ENCODE measurements at regions of chr5 and their contacts with region 1.

Region 1: GRCh38 chr5:55102348-55102747 is at the start of gene GZMA:
- DNase-seq: peak; percentile 39
- H3K4me3 Mint-ChIP-seq: peak within 1 kb of the TSS; percentile 59
- H3K27ac Mint-ChIP-seq: peak within 1 kb of the TSS; percentile 77
- H3K4me1 Mint-ChIP-seq: peaks cover 65% of the 10 kb centered on the region
- H3K27me3 Mint-ChIP-seq: peaks cover 2% of the 10 kb centered on the region
- total RNA-seq, gene GZMA: 13.7 to 16.9 TPM

Region 2: GRCh38 chr5:55021410-55021809 is 80.9 kb before region 1 on chr5:
- CTCF ChIA-PET with region 1: interaction called, 3 read pairs
- POLR2A ChIA-PET with region 1: no interaction called
- intact Hi-C with region 1: loop called (anchors 2 kb)
- DNase-seq: no peak
- H3K4me3 Mint-ChIP-seq: no peak overlapping the region
- H3K27ac Mint-ChIP-seq: no peak overlapping the region
- H3K4me1 Mint-ChIP-seq: peaks cover 43% of the 10 kb centered on the region
- H3K27me3 Mint-ChIP-seq: no peaks in the 10 kb centered on the region

Region 3: DNA sequence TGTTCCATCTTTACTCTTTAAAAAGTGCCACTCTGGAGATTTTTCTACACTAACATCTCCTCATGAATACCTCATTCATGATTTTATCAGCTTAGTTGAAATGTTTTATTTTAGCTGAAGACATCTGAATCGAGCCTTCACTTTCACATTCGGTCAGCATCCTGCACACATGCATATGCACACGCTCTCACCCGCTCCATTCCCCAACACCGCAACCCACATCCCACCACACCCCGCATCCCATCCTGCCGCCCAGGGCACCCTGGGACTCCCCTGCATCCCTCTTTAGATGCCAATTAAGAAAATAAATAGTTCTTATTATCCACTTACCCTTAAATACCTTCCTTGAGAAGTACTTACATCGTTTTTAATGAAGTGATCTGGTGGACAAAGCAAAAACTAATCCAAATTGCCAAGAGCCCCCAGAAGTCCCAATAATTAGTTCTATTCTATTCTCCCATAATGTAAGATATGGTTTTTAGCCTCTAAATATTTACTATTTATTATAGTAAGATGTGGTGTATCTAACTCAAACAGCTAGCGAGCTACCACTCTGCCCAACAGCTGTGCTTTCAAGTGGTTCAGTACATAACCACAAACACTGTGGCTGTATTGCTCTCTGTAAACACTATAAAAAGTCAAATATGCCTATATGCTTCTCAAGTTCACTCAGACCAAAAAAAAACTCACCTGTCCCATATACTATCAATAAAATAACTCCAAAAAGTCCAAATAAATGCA is 40.1 kb before region 1 on chr5:
- CTCF ChIA-PET with region 1: no interaction called
- POLR2A ChIA-PET with region 1: no interaction called
- intact Hi-C with region 1: loop called (anchors 5 kb)
- DNase-seq: peak; percentile 83
- H3K4me3 Mint-ChIP-seq: peak overlapping the region; percentile 63
- H3K27ac Mint-ChIP-seq: peak overlapping the region; percentile 80
- H3K4me1 Mint-ChIP-seq: peaks cover 44% of the 10 kb centered on the region
- H3K27me3 Mint-ChIP-seq: no peaks in the 10 kb centered on the region

Region 4: GRCh38 chr5:55072666-55073065 is 29.7 kb before region 1 on chr5:
- CTCF ChIA-PET with region 1: no interaction called
- POLR2A ChIA-PET with region 1: no interaction called
- intact Hi-C with region 1: loop called (anchors 2 kb)
- DNase-seq: no peak
- H3K4me3 Mint-ChIP-seq: peak overlapping the region; percentile 16
- H3K27ac Mint-ChIP-seq: peak overlapping the region; percentile 75
- H3K4me1 Mint-ChIP-seq: peaks cover 31% of the 10 kb centered on the region
- H3K27me3 Mint-ChIP-seq: no peaks in the 10 kb centered on the region

Region 5: DNA sequence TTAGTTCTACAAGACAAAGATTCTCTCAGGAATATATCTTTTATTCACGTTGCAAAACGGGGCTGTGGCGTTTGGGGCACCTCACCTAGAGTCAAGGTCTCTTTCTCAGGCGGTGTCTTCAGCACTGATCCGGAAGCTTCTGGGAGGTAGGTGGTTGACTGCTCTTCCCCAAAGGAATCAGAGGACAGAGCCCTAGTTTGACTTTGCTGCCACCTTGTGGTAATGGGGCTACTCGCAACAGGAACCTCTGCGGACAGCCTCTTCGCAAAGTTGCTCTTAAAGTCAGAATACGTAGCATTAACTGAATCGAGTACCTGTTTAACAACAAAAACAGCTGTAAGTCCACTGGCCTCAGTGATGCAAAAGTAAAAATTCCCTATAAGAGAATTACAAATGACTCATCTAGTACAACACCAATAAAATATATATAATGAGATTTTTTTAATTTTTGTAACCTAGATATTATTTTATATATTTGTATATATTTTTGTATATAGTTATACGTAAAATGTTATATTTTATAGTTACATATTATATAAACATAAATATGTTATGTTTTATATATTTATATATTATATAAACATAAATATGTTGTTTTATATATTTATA is 44.3 kb after region 1 on chr5:
- CTCF ChIA-PET with region 1: interaction called, 3 read pairs
- POLR2A ChIA-PET with region 1: no interaction called
- intact Hi-C with region 1: loop called (anchors 2 kb)
- DNase-seq: peak; percentile 89
- H3K4me3 Mint-ChIP-seq: no peak overlapping the region
- H3K27ac Mint-ChIP-seq: no peak overlapping the region
- H3K4me1 Mint-ChIP-seq: peaks cover 12% of the 10 kb centered on the region
- H3K27me3 Mint-ChIP-seq: peaks cover 1% of the 10 kb centered on the region

Measured in activated CD4-positive, alpha-beta memory T cell treated with anti-CD3 and anti-CD28 coated beads for 36 hours (primary cell).